Activated CD4-positive, alpha-beta memory T cell treated with anti-CD3 and anti-CD28 coated beads for 36 hours (primary cell): ENCODE measurements at regions of chr1 and their contacts with region 1.

Region 1: GRCh38 chr1:20194757-20195461 is 8.6 kb upstream of the PLA2G2C start:
- DNase-seq: peak; percentile 84
- H3K4me3 Mint-ChIP-seq: no peak overlapping the region
- H3K27ac Mint-ChIP-seq: no peak overlapping the region
- H3K4me1 Mint-ChIP-seq: peaks cover 2% of the 10 kb centered on the region
- H3K27me3 Mint-ChIP-seq: peaks cover 27% of the 10 kb centered on the region

Region 2: DNA sequence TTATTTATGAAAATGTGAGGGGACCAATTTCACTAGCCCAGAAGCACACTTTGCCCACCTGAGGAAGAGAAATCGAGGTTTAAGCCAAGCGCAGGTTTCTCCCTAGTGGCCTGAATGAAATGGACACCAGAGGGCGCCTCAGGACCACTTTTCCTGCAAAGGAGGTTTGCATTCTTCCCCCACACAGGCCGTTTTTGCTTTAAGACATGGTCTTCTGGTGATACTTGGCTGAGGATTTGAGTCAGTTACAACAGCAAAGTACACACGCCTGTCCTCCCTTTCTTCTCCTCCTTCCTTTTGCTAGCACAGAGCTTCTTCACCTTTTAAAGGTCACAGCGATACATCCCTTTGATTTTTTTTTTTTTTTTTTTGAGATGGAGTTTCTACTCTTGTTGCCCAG is 276.9 kb before region 1 on chr1:
- CTCF ChIA-PET with region 1: interaction called, 32 read pairs
- POLR2A ChIA-PET with region 1: no interaction called
- intact Hi-C with region 1: loop called (anchors 2 kb)
- DNase-seq: peak; percentile 86
- H3K4me3 Mint-ChIP-seq: no peak overlapping the region
- H3K27ac Mint-ChIP-seq: no peak overlapping the region
- H3K4me1 Mint-ChIP-seq: peaks cover 2% of the 10 kb centered on the region
- H3K27me3 Mint-ChIP-seq: no peaks in the 10 kb centered on the region

Region 3: GRCh38 chr1:20100632-20101355 is 94.1 kb before region 1 on chr1:
- CTCF ChIA-PET with region 1: interaction called, 19 read pairs
- POLR2A ChIA-PET with region 1: no interaction called
- intact Hi-C with region 1: no loop called
- DNase-seq: peak; percentile 51
- H3K4me3 Mint-ChIP-seq: no peak overlapping the region
- H3K27ac Mint-ChIP-seq: no peak overlapping the region
- H3K4me1 Mint-ChIP-seq: peaks cover 2% of the 10 kb centered on the region
- H3K27me3 Mint-ChIP-seq: peaks cover 3% of the 10 kb centered on the region

Region 4: DNA sequence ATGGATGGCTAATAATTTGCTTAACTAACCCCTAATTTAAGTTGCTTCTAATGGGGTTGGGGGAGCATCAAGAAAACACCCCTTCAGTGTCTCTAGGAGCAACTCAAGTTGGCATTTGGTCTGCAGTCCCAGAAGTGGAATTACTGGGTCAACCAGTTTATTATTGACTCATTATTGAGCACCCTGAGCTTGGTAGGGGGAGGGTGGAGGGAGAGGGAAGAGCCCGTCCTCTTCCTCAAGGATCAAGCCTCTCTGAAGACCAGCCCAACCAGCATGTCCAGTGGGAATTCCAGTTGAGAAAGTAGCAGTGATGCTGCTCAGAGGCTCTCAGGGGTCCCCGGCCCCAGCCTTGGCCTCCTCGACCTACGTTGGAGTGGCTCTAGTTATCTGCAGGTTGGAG is 57.9 kb before region 1 on chr1:
- CTCF ChIA-PET with region 1: no interaction called
- POLR2A ChIA-PET with region 1: no interaction called
- intact Hi-C with region 1: no loop called
- DNase-seq: no peak
- H3K4me3 Mint-ChIP-seq: no peak overlapping the region
- H3K27ac Mint-ChIP-seq: no peak overlapping the region
- H3K4me1 Mint-ChIP-seq: no peaks in the 10 kb centered on the region
- H3K27me3 Mint-ChIP-seq: peaks cover 9% of the 10 kb centered on the region

Region 5: GRCh38 chr1:20160034-20160433 is 34.9 kb before region 1 on chr1:
- CTCF ChIA-PET with region 1: interaction called, 58 read pairs
- POLR2A ChIA-PET with region 1: no interaction called
- intact Hi-C with region 1: loop called (anchors 1 kb)
- DNase-seq: no peak
- H3K4me3 Mint-ChIP-seq: no peak overlapping the region
- H3K27ac Mint-ChIP-seq: no peak overlapping the region
- H3K4me1 Mint-ChIP-seq: no peaks in the 10 kb centered on the region
- H3K27me3 Mint-ChIP-seq: no peaks in the 10 kb centered on the region

Region 6: GRCh38 chr1:20174937-20175666 is 19.8 kb before region 1 on chr1:
- CTCF ChIA-PET with region 1: interaction called, 60 read pairs
- POLR2A ChIA-PET with region 1: no interaction called
- intact Hi-C with region 1: no loop called
- DNase-seq: no peak
- H3K4me3 Mint-ChIP-seq: no peak overlapping the region
- H3K27ac Mint-ChIP-seq: no peak overlapping the region
- H3K4me1 Mint-ChIP-seq: peaks cover 16% of the 10 kb centered on the region
- H3K27me3 Mint-ChIP-seq: no peaks in the 10 kb centered on the region